ENCODE measurements at regions of chr3 and their contacts with region 1.

Region 1: DNA sequence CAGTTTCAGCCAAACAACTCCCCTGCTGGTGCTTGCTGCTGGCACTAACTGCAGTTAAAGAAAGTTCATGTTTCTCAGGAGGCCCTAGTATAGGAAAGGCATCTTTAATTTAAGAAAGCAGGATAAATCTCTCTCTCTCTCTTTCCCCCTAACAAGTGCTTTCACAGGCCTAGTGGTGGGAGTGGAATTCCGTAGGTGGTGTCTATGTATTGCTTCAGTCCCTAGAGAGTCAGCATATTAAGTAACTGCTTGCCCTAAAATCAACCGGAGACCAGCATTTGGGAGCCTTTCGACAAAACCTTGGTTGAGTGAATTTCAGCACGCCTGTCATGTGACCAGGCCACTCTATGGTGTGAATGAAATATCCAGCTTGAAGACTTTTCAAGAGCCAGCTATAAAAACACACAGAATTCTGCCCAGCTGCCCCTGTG is 169.2 kb upstream of the TGFBR2 start:
- DNase-seq: no peak
- ATAC-seq: no peak
- H3K4me3 ChIP-seq: no peak overlapping the region
- H3K4me3 Mint-ChIP-seq: peak overlapping the region; percentile 51
- H3K27ac ChIP-seq: no peak overlapping the region
- H3K27ac Mint-ChIP-seq: peak overlapping the region; percentile 85
- H3K4me1 ChIP-seq: no peaks in the 10 kb centered on the region
- H3K4me1 Mint-ChIP-seq: peaks cover 39% of the 10 kb centered on the region
- H3K27me3 ChIP-seq: no peaks in the 10 kb centered on the region
- H3K27me3 Mint-ChIP-seq: no peaks in the 10 kb centered on the region
- CTCF ChIP-seq: no peak

Region 2: GRCh38 chr3:30347679-30348216 is 89.4 kb before region 1 on chr3:
- CTCF ChIA-PET with region 1: no interaction called
- POLR2A ChIA-PET with region 1: no interaction called
- intact Hi-C with region 1: loop called in 1 of 2 experiments (anchors 10 kb)
- DNase-seq: peak in 4 of 14 experiments; percentile 13 to 65 (median 36)
- ATAC-seq: peak; percentile 94
- H3K4me3 ChIP-seq: no peak overlapping the region
- H3K4me3 Mint-ChIP-seq: peak overlapping the region; percentile 23
- H3K27ac ChIP-seq: no peak overlapping the region
- H3K27ac Mint-ChIP-seq: peak overlapping the region; percentile 46
- H3K4me1 ChIP-seq: peaks cover 15% of the 10 kb centered on the region
- H3K4me1 Mint-ChIP-seq: peaks cover 74% of the 10 kb centered on the region
- H3K27me3 ChIP-seq: no peaks in the 10 kb centered on the region
- H3K27me3 Mint-ChIP-seq: no peaks in the 10 kb centered on the region
- CTCF ChIP-seq: no peak

Region 3: DNA sequence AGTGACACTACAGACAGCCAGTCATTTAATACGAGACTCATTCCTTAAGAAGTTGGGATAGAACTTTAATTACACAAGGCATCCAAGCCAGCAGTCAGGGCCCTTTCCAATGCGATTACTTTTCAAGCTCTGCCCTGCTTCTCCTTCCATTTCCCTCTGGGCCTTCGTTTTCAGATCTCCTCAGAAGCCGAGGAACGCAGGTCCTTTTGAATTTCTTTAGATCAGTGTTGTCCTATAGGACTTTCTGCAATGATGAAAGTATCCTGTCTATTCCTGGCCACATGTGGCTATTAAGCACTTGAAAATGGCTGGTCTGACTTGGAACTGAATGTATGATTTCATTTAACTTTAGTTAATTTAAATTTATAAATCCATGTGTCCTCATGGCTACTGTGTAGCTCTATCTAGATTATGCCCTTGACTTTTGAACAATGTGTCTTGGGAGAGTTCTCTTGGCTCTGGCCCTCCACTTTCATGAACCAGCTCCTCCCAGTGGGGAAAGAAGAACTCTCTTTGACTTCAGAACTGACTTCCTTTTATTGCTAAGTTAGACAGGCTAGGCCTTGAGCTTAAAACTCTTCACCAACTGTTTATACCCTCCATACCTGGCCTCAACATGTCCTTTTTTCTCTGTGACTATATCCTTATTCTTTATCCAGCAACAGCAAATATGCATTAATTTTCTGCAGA is 191.9 kb after region 1 on chr3:
- CTCF ChIA-PET with region 1: no interaction called
- POLR2A ChIA-PET with region 1: no interaction called
- intact Hi-C with region 1: loop called in 1 of 2 experiments (anchors 5 kb)
- DNase-seq: peak in 4 of 14 experiments; percentile 43 to 75 (median 73)
- ATAC-seq: peak; percentile 32
- H3K4me3 ChIP-seq: no peak overlapping the region
- H3K4me3 Mint-ChIP-seq: peak overlapping the region; percentile 68
- H3K27ac ChIP-seq: peak overlapping the region; percentile 77 to 90
- H3K27ac Mint-ChIP-seq: peak overlapping the region; percentile 96
- H3K4me1 ChIP-seq: peaks cover 74% of the 10 kb centered on the region
- H3K4me1 Mint-ChIP-seq: peaks cover 100% of the 10 kb centered on the region
- H3K27me3 ChIP-seq: no peaks in the 10 kb centered on the region
- H3K27me3 Mint-ChIP-seq: no peaks in the 10 kb centered on the region
- CTCF ChIP-seq: peak; percentile 40